ENCODE measurements at regions of chr13 and their contacts with region 1.

Region 1: GRCh38 chr13:79679334-79679733 is 198.4 kb downstream of the NDFIP2 start:
- DNase-seq: peak; percentile 81 to 84
- H3K4me3 ChIP-seq: no peak overlapping the region
- H3K27ac ChIP-seq: no peak overlapping the region
- H3K4me1 ChIP-seq: no peaks in the 10 kb centered on the region
- H3K27me3 ChIP-seq: no peaks in the 10 kb centered on the region
- CTCF ChIP-seq: peak; percentile 69 to 85 (median 80)
- POLR2A ChIP-seq: no peak

Region 2: GRCh38 chr13:79349011-79349410 is 330.3 kb before region 1 on chr13:
- intact Hi-C with region 1: no loop called
- DNase-seq: no peak
- H3K4me3 ChIP-seq: no peak overlapping the region
- H3K27ac ChIP-seq: no peak overlapping the region
- H3K4me1 ChIP-seq: no peaks in the 10 kb centered on the region
- H3K27me3 ChIP-seq: no peaks in the 10 kb centered on the region
- CTCF ChIP-seq: no peak
- POLR2A ChIP-seq: no peak

Region 3: DNA sequence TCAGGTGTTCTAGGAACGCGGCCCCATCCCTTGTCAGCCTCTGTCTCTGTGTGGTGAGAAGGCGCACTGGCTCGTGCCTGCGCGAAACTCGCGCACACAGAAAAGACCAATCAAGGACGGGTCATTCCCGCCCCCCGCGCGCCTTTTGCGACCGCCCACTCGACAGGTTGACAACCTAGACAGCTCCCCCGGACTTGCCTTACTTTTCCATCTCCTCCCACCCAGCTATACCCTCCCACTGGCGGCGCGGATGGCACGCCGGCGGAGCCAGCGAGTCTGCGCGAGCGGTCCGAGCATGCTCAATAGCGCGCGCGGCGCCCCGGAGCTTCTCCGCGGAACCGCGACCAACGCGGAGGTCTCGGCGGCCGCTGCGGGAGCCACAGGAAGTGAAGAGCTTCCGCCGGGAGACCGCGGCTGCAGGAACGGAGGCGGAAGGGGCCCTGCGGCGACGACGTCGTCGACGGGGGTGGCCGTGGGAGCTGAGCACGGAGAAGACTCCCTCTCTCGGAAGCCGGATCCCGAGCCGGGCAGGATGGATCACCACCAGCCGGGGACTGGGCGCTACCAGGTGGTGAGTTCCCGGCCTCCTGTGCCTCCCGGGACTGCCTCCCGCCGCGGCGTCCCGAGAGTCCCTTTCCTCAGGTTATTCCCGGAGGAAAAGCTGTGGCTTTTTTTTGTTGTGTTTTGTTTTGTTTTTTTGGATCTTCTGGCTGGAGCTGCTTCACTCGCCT is 198.2 kb before region 1 on chr13 and contains the start of gene NDFIP2:
- intact Hi-C with region 1: no loop called
- DNase-seq: peak; percentile 91 to 93
- H3K4me3 ChIP-seq: peak within 1 kb of the TSS; percentile 63 to 93 (median 89)
- H3K27ac ChIP-seq: peak within 1 kb of the TSS; percentile 65 to 79 (median 67)
- H3K4me1 ChIP-seq: peaks cover 11 to 17% of the 10 kb centered on the region in 2 donors
- H3K27me3 ChIP-seq: no peaks in the 10 kb centered on the region
- CTCF ChIP-seq: no peak
- POLR2A ChIP-seq: peak in 1 of 2 donors; percentile 83
- total RNA-seq, gene NDFIP2: 19.4 to 31.3 (median 23.7) TPM

Region 4: DNA sequence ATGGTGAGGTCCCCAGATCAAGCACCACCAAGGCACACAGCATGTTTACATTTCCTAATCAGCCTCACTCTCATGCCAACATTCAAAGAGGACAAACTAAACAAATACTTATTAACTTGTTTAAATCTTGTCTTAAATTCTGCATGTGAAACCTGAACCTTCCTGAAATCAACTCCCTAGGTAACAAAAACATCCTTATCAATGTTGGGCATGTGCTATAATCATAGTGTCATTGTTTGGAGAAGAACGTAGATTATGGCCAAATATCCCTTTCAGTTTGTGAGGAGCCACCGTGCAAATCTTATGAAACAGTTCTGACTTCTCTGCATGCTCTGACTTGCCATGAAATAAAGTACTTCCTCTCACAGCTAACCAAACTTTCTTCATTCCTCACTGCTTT is 74.6 kb before region 1 on chr13:
- intact Hi-C with region 1: no loop called
- DNase-seq: no peak
- H3K4me3 ChIP-seq: no peak overlapping the region
- H3K27ac ChIP-seq: no peak overlapping the region
- H3K4me1 ChIP-seq: no peaks in the 10 kb centered on the region
- H3K27me3 ChIP-seq: no peaks in the 10 kb centered on the region
- CTCF ChIP-seq: no peak
- POLR2A ChIP-seq: no peak

Region 5: GRCh38 chr13:79936368-79937136 is 257.2 kb after region 1 on chr13:
- intact Hi-C with region 1: no loop called
- DNase-seq: no peak
- H3K4me3 ChIP-seq: no peak overlapping the region
- H3K27ac ChIP-seq: peak overlapping the region in 2 of 3 donors; percentile 13 to 41
- H3K4me1 ChIP-seq: no peaks in the 10 kb centered on the region
- H3K27me3 ChIP-seq: no peaks in the 10 kb centered on the region
- CTCF ChIP-seq: no peak
- POLR2A ChIP-seq: no peak

Region 6: GRCh38 chr13:80342471-80343380 is 663.4 kb after region 1 on chr13:
- intact Hi-C with region 1: loop called (anchors 10 kb)
- DNase-seq: peak; percentile 80 to 85
- H3K4me3 ChIP-seq: peak overlapping the region; percentile 29 to 63 (median 58)
- H3K27ac ChIP-seq: peak overlapping the region; percentile 79 to 95 (median 86)
- H3K4me1 ChIP-seq: peaks cover 3 to 5% of the 10 kb centered on the region in 2 donors
- H3K27me3 ChIP-seq: no peaks in the 10 kb centered on the region
- CTCF ChIP-seq: peak; percentile 67 to 99 (median 94)
- POLR2A ChIP-seq: peak in 1 of 2 donors; percentile 62